ENCODE measurements at regions of chrX and their contacts with region 1.

Region 1: GRCh38 chrX:154714925-154715324 is 36.0 kb downstream of the GAB3 start:
- DNase-seq: peak in 8 of 14 experiments; percentile 11 to 77 (median 55)
- ATAC-seq: peak; percentile 35
- H3K4me3 ChIP-seq: no peak overlapping the region
- H3K4me3 Mint-ChIP-seq: peak overlapping the region; percentile 1
- H3K27ac ChIP-seq: no peak overlapping the region
- H3K27ac Mint-ChIP-seq: peak overlapping the region; percentile 30
- H3K4me1 ChIP-seq: peaks cover 52% of the 10 kb centered on the region
- H3K4me1 Mint-ChIP-seq: peaks cover 62% of the 10 kb centered on the region
- H3K27me3 ChIP-seq: no peaks in the 10 kb centered on the region
- H3K27me3 Mint-ChIP-seq: no peaks in the 10 kb centered on the region
- CTCF ChIP-seq: peak; percentile 66

Region 2: GRCh38 chrX:154526901-154527675 is 187.8 kb before region 1 on chrX:
- CTCF ChIA-PET with region 1: no interaction called
- POLR2A ChIA-PET with region 1: no interaction called
- intact Hi-C with region 1: no loop called
- DNase-seq: peak; percentile 36 to 77 (median 54)
- ATAC-seq: peak; percentile 93
- H3K4me3 ChIP-seq: peak overlapping the region; percentile 5
- H3K4me3 Mint-ChIP-seq: no peak overlapping the region
- H3K27ac ChIP-seq: no peak overlapping the region
- H3K27ac Mint-ChIP-seq: peak overlapping the region; percentile 51
- H3K4me1 ChIP-seq: peaks cover 24% of the 10 kb centered on the region
- H3K4me1 Mint-ChIP-seq: peaks cover 22% of the 10 kb centered on the region
- H3K27me3 ChIP-seq: no peaks in the 10 kb centered on the region
- H3K27me3 Mint-ChIP-seq: no peaks in the 10 kb centered on the region
- CTCF ChIP-seq: no peak

Region 3: GRCh38 chrX:154734061-154734781 is 19.3 kb after region 1 on chrX:
- CTCF ChIA-PET with region 1: no interaction called
- POLR2A ChIA-PET with region 1: interaction called, 6 read pairs
- intact Hi-C with region 1: loop called (anchors 2 kb)
- DNase-seq: peak in 11 of 14 experiments; percentile 13 to 72 (median 45)
- ATAC-seq: peak; percentile 73
- H3K4me3 ChIP-seq: peak overlapping the region; percentile 4
- H3K4me3 Mint-ChIP-seq: peak overlapping the region; percentile 81
- H3K27ac ChIP-seq: peak overlapping the region; percentile 40 to 66
- H3K27ac Mint-ChIP-seq: peak overlapping the region; percentile 94
- H3K4me1 ChIP-seq: peaks cover 80% of the 10 kb centered on the region
- H3K4me1 Mint-ChIP-seq: peaks cover 90% of the 10 kb centered on the region
- H3K27me3 ChIP-seq: no peaks in the 10 kb centered on the region
- H3K27me3 Mint-ChIP-seq: no peaks in the 10 kb centered on the region
- CTCF ChIP-seq: no peak

Region 4: DNA sequence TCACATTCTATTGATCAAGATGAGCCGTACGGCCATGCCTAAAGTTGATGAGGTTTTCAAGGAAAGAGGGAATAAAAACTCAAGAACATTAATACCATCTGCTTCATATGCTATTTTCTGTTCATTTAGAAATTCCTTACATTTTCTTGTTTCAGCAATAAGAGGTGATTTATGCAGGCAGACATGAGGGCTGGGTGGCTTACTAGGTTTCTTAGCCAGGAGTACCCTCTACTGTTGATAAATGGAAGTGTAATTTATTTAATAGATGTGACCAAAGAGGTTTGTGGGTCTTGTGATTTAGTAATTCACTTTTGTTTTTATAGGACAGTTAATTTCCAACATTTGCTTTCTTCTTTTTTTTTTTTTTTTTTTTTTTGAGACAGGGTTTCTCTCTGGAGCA is 125.9 kb after region 1 on chrX:
- CTCF ChIA-PET with region 1: no interaction called
- POLR2A ChIA-PET with region 1: no interaction called
- intact Hi-C with region 1: loop called in 1 of 2 experiments (anchors 10 kb)
- DNase-seq: peak in 5 of 14 experiments; percentile 1 to 66 (median 58)
- ATAC-seq: peak; percentile 68
- H3K4me3 ChIP-seq: no peak overlapping the region
- H3K4me3 Mint-ChIP-seq: no peak overlapping the region
- H3K27ac ChIP-seq: no peak overlapping the region
- H3K27ac Mint-ChIP-seq: no peak overlapping the region
- H3K4me1 ChIP-seq: no peaks in the 10 kb centered on the region
- H3K4me1 Mint-ChIP-seq: no peaks in the 10 kb centered on the region
- H3K27me3 ChIP-seq: no peaks in the 10 kb centered on the region
- H3K27me3 Mint-ChIP-seq: no peaks in the 10 kb centered on the region
- CTCF ChIP-seq: peak; percentile 65